ENCODE measurements at regions of chr14 and their contacts with region 1.

Region 1: GRCh38 chr14:75182841-75183624 is 6.6 kb upstream of the TMED10 start:
- DNase-seq: peak in 1 of 2 donors; percentile 79
- H3K4me3 ChIP-seq: no peak overlapping the region
- H3K27ac ChIP-seq: peak overlapping the region; percentile 86 to 94
- H3K4me1 ChIP-seq: peaks cover 17 to 38% of the 10 kb centered on the region in 2 donors
- H3K27me3 ChIP-seq: no peaks in the 10 kb centered on the region
- CTCF ChIP-seq: no peak

Region 2: DNA sequence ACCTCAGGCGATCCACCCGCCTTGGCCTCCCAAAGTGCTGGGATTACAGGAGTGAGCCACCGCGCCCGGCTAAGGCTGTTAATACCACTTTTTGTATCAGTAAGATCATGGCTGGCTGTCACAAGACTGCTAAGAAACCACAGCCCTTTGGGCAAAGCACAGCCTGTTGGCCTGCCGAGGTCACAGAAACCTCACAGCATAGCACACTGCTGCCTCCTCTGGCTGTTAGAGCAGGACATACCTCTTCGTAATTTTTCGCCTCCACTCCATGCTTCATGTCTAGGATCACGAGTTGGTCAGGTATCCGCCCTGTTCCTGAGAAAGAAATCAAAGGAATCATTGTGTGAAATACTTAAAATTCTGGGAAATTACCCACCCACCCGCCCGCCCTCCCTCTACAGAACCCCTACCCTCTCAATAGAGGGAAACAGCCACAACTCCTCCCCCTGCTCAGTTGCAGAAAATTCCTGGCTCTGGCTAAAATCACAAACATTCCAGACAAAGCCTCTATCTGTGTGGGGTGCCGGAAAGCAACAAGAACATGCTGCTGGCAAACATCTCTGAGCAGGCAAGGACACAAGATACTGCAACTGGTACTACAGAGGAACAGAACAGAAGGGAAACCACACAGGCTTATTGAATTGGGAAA is 35.5 kb before region 1 on chr14:
- intact Hi-C with region 1: loop called (anchors 5 kb)
- DNase-seq: peak; percentile 15 to 88
- H3K4me3 ChIP-seq: peak overlapping the region in 1 of 2 donors; percentile 2
- H3K27ac ChIP-seq: peak overlapping the region; percentile 74 to 85
- H3K4me1 ChIP-seq: peaks cover 4 to 27% of the 10 kb centered on the region in 2 donors
- H3K27me3 ChIP-seq: no peaks in the 10 kb centered on the region
- CTCF ChIP-seq: peak; percentile 11 to 50 (median 49)